ENCODE measurements at regions of chr11 and their contacts with region 1.

Region 1: GRCh38 chr11:132289590-132290256 is 919.3 kb downstream of the NTM start:
- H3K4me3 Mint-ChIP-seq: no peak overlapping the region
- H3K27ac Mint-ChIP-seq: no peak overlapping the region
- H3K4me1 Mint-ChIP-seq: no peaks in the 10 kb centered on the region
- H3K27me3 Mint-ChIP-seq: no peaks in the 10 kb centered on the region

Region 2: GRCh38 chr11:132361011-132361550 is 71.4 kb after region 1 on chr11:
- intact Hi-C with region 1: loop called (anchors 10 kb)
- H3K4me3 Mint-ChIP-seq: no peak overlapping the region
- H3K27ac Mint-ChIP-seq: no peak overlapping the region
- H3K4me1 Mint-ChIP-seq: no peaks in the 10 kb centered on the region
- H3K27me3 Mint-ChIP-seq: no peaks in the 10 kb centered on the region

Region 3: GRCh38 chr11:132734217-132734616 is 444.5 kb after region 1 on chr11:
- intact Hi-C with region 1: no loop called
- H3K4me3 Mint-ChIP-seq: no peak overlapping the region
- H3K27ac Mint-ChIP-seq: no peak overlapping the region
- H3K4me1 Mint-ChIP-seq: no peaks in the 10 kb centered on the region
- H3K27me3 Mint-ChIP-seq: no peaks in the 10 kb centered on the region

Measured in dendritic cell treated with granulocyte-macrophage colony-stimulating factor and Interleukin-4, amounts not matched to agents 40 ng/mL and 50 ng/mL, for 4 days (primary cell).